Panc1 (cell line): ENCODE measurements at regions of chr1 and their contacts with region 1.

Region 1: DNA sequence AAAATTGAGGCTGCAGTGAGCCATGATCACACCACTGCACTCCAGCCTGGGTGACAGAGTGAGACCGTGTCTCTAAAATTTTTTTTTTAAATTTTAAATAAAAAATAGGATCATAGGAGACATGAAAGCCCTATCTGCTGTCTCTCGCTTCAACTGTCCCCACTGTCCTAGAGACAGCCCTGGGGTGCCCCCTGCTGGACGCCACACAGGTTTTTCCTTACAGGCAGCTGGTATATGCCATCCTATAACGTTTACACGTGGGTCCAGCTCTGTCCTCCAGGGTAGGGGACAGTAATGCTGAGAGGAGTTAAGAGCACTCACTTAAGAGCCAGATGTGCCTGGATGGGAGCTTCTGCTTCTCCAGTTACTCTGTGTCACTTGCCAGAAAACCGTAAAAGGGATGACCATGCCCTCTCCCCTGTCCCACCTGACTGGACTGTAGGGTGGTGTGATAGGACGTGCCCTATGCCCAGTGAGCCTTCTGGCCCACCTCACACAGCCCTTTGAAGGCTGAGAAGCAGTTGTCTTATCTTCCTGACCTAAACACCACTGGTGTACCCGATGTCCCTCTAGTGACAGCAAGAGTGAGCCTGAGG is 8.5 kb downstream of the FBXO2 start:
- DNase-seq: peak; percentile 45
- ATAC-seq: peak; percentile 85
- H3K4me3 ChIP-seq: no peak overlapping the region
- H3K27ac ChIP-seq: no peak overlapping the region
- H3K4me1 ChIP-seq: peaks cover 13% of the 10 kb centered on the region
- H3K27me3 ChIP-seq: no peaks in the 10 kb centered on the region
- CTCF ChIP-seq: peak; percentile 94

Region 2: GRCh38 chr1:11037740-11038182 is 608.0 kb before region 1 on chr1:
- CTCF ChIA-PET with region 1: interaction called, 4 read pairs
- POLR2A ChIA-PET with region 1: no interaction called
- in situ Hi-C with region 1: no loop called
- intact Hi-C with region 1: loop called (anchors 10 kb)
- DNase-seq: peak; percentile 78
- ATAC-seq: peak; percentile 95
- H3K4me3 ChIP-seq: no peak overlapping the region
- H3K27ac ChIP-seq: no peak overlapping the region
- H3K4me1 ChIP-seq: no peaks in the 10 kb centered on the region
- H3K27me3 ChIP-seq: no peaks in the 10 kb centered on the region
- CTCF ChIP-seq: peak; percentile 99

Region 3: GRCh38 chr1:11248155-11248554 is 397.6 kb before region 1 on chr1:
- CTCF ChIA-PET with region 1: no interaction called
- POLR2A ChIA-PET with region 1: no interaction called
- in situ Hi-C with region 1: no loop called
- intact Hi-C with region 1: loop called (anchors 5 kb)
- DNase-seq: no peak
- ATAC-seq: peak; percentile 63; the same call in 1 of the 2 replicates
- H3K4me3 ChIP-seq: no peak overlapping the region
- H3K27ac ChIP-seq: no peak overlapping the region
- H3K4me1 ChIP-seq: no peaks in the 10 kb centered on the region
- H3K27me3 ChIP-seq: no peaks in the 10 kb centered on the region
- CTCF ChIP-seq: no peak

Region 4: GRCh38 chr1:11272832-11273594 is 372.8 kb before region 1 on chr1 and contains the start of gene UBIAD1:
- CTCF ChIA-PET with region 1: interaction called, 13 read pairs
- POLR2A ChIA-PET with region 1: no interaction called
- in situ Hi-C with region 1: no loop called
- intact Hi-C with region 1: no loop called
- DNase-seq: no peak
- ATAC-seq: peak; percentile 95
- H3K4me3 ChIP-seq: peak within 1 kb of the TSS; percentile 79 to 85
- H3K27ac ChIP-seq: peak within 1 kb of the TSS; percentile 87
- H3K4me1 ChIP-seq: peaks cover 10% of the 10 kb centered on the region; the same call in 1 of the 2 replicates
- H3K27me3 ChIP-seq: no peaks in the 10 kb centered on the region
- CTCF ChIP-seq: no peak
- total RNA-seq, gene UBIAD1: 24.7 TPM

Region 5: GRCh38 chr1:11337580-11338073 is 308.1 kb before region 1 on chr1:
- CTCF ChIA-PET with region 1: no interaction called
- POLR2A ChIA-PET with region 1: no interaction called
- in situ Hi-C with region 1: no loop called
- intact Hi-C with region 1: loop called (anchors 10 kb)
- DNase-seq: peak; percentile 18
- ATAC-seq: peak; percentile 84
- H3K4me3 ChIP-seq: no peak overlapping the region
- H3K27ac ChIP-seq: no peak overlapping the region
- H3K4me1 ChIP-seq: no peaks in the 10 kb centered on the region
- H3K27me3 ChIP-seq: no peaks in the 10 kb centered on the region
- CTCF ChIP-seq: peak; percentile 91

Region 6: DNA sequence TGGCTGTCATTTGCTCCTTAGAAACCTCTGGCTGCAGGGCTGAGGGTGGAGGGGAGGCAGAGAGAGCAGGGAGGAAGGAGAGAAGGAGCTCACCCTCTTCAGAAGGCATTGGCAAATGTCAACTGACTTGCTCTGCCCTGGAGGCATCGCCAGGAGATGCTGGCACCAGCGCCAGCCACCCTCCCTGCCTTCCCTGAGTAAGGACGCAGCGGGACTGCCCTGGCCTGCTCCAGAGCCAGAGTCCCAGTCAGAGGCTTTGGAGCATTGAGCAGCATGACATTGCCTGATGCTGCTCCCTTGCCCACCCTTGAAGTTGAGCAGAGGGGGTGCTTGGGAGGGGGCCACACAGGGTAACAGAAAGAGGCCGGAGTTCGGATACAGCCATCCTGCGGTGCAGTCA is 104.5 kb before region 1 on chr1:
- CTCF ChIA-PET with region 1: no interaction called
- POLR2A ChIA-PET with region 1: no interaction called
- in situ Hi-C with region 1: no loop called
- intact Hi-C with region 1: no loop called
- DNase-seq: no peak
- ATAC-seq: no peak
- H3K4me3 ChIP-seq: no peak overlapping the region
- H3K27ac ChIP-seq: no peak overlapping the region
- H3K4me1 ChIP-seq: no peaks in the 10 kb centered on the region
- H3K27me3 ChIP-seq: peaks cover 6% of the 10 kb centered on the region
- CTCF ChIP-seq: no peak

Region 7: GRCh38 chr1:11719313-11720032 is 73.7 kb after region 1 on chr1:
- CTCF ChIA-PET with region 1: interaction called, 8 read pairs
- POLR2A ChIA-PET with region 1: interaction called, 7 read pairs
- in situ Hi-C with region 1: no loop called
- intact Hi-C with region 1: loop called (anchors 5 kb)
- DNase-seq: no peak
- ATAC-seq: peak; percentile 82
- H3K4me3 ChIP-seq: peak overlapping the region; percentile 33 to 54
- H3K27ac ChIP-seq: 0 out of 2 replicates have a peak overlapping the region, but pooled peaks have one; percentile 29
- H3K4me1 ChIP-seq: no peaks in the 10 kb centered on the region; the same call in 1 of the 2 replicates
- H3K27me3 ChIP-seq: no peaks in the 10 kb centered on the region
- CTCF ChIP-seq: peak; percentile 97

Region 8: GRCh38 chr1:11744287-11744686 is 98.5 kb after region 1 on chr1:
- CTCF ChIA-PET with region 1: no interaction called
- POLR2A ChIA-PET with region 1: no interaction called
- in situ Hi-C with region 1: no loop called
- intact Hi-C with region 1: no loop called
- DNase-seq: no peak
- ATAC-seq: no peak
- H3K4me3 ChIP-seq: no peak overlapping the region
- H3K27ac ChIP-seq: no peak overlapping the region
- H3K4me1 ChIP-seq: no peaks in the 10 kb centered on the region
- H3K27me3 ChIP-seq: no peaks in the 10 kb centered on the region
- CTCF ChIP-seq: no peak

Region 9: GRCh38 chr1:11805447-11806306 is 159.9 kb after region 1 on chr1 and contains the starts of genes CLCN6 and MTHFR:
- CTCF ChIA-PET with region 1: no interaction called
- POLR2A ChIA-PET with region 1: no interaction called
- in situ Hi-C with region 1: no loop called
- intact Hi-C with region 1: no loop called
- DNase-seq: peak; percentile 92
- ATAC-seq: peak; percentile 94
- H3K4me3 ChIP-seq: peak within 1 kb of the TSS; percentile 74 to 93
- H3K27ac ChIP-seq: peak within 1 kb of the TSS; percentile 97
- H3K4me1 ChIP-seq: peaks cover 41% of the 10 kb centered on the region
- H3K27me3 ChIP-seq: no peaks in the 10 kb centered on the region
- CTCF ChIP-seq: no peak
- total RNA-seq, gene CLCN6: 23.6 TPM
- total RNA-seq, gene MTHFR: 37.4 TPM